ENCODE measurements at regions of chrX and their contacts with region 1.

Region 1: GRCh38 chrX:50081282-50081889 is 119.4 kb downstream of the AKAP4 start:
- DNase-seq: peak; percentile 27
- H3K4me3 ChIP-seq: no peak overlapping the region
- H3K27ac ChIP-seq: no peak overlapping the region
- H3K4me1 ChIP-seq: no peaks in the 10 kb centered on the region
- H3K27me3 ChIP-seq: no peaks in the 10 kb centered on the region
- CTCF ChIP-seq: peak in 3 of 5 experiments; percentile 18 to 21 (median 20)
- EP300 ChIP-seq: no peak
- POLR2A ChIP-seq: no peak

Region 2: GRCh38 chrX:49922291-49923241 is 158.8 kb before region 1 on chrX and contains the start of gene CLCN5:
- in situ Hi-C with region 1: loop called in 2 of 4 experiments (anchors 25 kb)
- intact Hi-C with region 1: no loop called
- DNase-seq: peak; percentile 96
- H3K4me3 ChIP-seq: peak within 1 kb of the TSS; percentile 48 to 92 (median 72)
- H3K27ac ChIP-seq: peak within 1 kb of the TSS; percentile 81 to 89 (median 85)
- H3K4me1 ChIP-seq: peaks cover 0 to 5% (median 1%) of the 10 kb centered on the region in 4 donors
- H3K27me3 ChIP-seq: no peaks in the 10 kb centered on the region
- CTCF ChIP-seq: no peak
- EP300 ChIP-seq: no peak
- POLR2A ChIP-seq: peak; percentile 52
- total RNA-seq, gene CLCN5: 3.7 to 8.2 (median 5.5) TPM